ENCODE measurements at regions of chr13 and their contacts with region 1.

Region 1: GRCh38 chr13:102596147-102597028 is at the start of gene TPP2:
- DNase-seq: peak; percentile 99
- CTCF ChIP-seq: no peak

Region 2: GRCh38 chr13:102773441-102774215 is 177.2 kb after region 1 on chr13 and contains the start of gene TEX30:
- in situ Hi-C with region 1: loop called (anchors 10 kb)
- DNase-seq: peak; percentile 93
- CTCF ChIP-seq: no peak

Region 3: DNA sequence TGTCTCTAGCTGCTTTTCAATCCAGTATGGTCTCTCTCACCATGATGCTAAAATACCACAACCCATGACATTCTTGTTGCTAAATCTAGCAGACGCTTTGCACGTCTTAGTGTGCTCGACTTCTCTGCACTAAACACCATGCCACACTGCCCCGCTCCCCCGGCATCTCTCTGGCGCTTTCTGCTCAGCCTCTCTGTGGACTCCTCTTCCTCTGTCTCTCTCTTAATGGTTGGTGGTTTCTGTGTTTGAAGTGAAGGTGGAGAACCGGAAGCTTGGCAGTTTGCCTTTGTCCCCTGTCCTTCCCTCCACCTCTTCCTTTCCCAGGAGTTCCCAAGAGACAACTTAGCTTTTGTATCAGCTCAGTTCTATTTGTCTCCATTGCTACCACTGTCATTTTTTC is 258.3 kb after region 1 on chr13:
- in situ Hi-C with region 1: loop called (anchors 5 kb)
- DNase-seq: no peak
- CTCF ChIP-seq: no peak

Region 4: GRCh38 chr13:103140001-103140671 is 543.7 kb after region 1 on chr13:
- in situ Hi-C with region 1: loop called (anchors 25 kb)
- DNase-seq: peak; percentile 47
- CTCF ChIP-seq: peak; percentile 74

Measured in GM13976 (cell line).